OCI-LY7 (cell line): ENCODE measurements at regions of chr11 and their contacts with region 1.

Region 1: DNA sequence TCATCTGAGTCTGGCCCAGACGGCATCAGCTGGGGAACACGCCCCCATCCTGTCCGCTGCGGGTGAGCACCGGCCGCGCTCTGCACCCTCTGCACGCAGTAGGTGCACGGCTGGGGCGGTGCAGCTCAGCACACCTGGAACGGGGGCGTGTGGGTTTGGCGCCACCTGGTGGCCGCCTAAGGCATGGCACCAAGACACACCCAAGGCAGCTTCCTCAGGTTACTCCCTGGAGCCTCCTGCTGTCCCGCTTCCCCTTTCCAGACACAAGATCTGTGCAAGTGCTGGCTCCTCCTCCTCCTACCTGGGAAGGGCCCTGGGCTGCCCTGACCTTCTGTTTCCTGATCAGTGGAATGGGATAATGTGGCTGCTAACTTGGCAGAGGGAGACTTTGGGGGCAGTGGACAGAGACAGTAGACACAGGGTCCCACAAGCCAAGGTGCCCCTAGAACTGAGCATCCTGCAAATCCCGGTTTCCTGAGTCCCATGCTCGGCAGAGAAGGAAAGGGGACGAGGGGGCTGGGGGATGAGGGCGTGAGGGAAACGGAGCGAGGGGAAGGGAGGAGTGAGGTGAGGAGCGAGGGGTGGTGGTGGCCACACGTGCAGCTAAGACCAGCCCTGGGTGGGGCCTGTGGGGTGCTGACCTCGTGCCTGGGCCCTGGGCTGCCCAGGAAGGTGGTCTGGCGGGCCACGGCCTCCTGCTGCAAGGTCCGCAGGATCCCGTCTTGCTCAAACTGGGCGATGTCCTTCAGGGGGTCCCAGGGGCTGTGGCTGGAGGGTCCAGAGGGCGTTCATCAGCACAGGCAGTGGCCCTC is 34.8 kb upstream of the CARS1 start:
- DNase-seq: peak; percentile 61
- H3K4me3 ChIP-seq: no peak overlapping the region
- H3K27ac ChIP-seq: no peak overlapping the region
- H3K4me1 ChIP-seq: no peaks in the 10 kb centered on the region
- CTCF ChIP-seq: peak; percentile 89

Region 2: DNA sequence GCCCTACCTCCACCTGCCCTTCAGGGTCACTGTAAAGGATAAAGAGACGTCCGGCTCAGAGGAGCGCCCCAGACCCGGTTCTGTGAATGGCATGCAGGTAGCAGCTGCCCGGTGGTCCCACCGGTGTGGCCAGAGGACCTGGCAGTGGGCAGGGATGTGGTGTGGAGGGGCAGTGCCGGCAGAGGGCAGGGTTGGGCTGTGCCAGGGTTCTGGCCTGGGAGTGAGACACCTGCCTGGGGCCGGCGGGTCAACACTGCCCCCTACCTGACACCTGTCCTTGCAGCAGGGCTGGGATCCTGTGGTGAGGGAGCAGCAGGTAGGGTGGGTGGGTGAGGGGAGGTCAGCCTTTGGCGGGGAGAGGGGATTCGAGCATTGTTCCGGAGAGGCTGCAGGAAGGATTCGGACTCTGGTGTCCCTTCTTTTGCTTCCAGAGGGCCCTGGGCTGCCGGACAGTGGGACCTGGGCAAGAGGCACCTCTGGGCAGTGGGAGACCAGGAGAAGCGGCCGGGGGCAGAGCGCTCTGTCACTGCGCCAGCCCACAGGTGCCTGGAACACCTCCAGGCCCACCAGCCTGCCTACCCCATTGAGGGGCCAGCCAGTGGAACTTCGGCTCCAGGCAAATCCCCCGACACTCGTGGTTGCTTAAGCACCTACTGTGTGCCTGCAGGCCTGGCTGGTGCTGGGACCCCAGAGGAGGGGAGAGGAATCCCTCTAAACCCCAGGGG is 161.1 kb before region 1 on chr11:
- CTCF ChIA-PET with region 1: no interaction called
- POLR2A ChIA-PET with region 1: no interaction called
- intact Hi-C with region 1: loop called (anchors 2 kb)
- DNase-seq: peak; percentile 73
- H3K4me3 ChIP-seq: no peak overlapping the region
- H3K27ac ChIP-seq: no peak overlapping the region
- H3K4me1 ChIP-seq: no peaks in the 10 kb centered on the region
- CTCF ChIP-seq: peak; percentile 80

Region 3: GRCh38 chr11:3037040-3037944 is 54.7 kb before region 1 on chr11:
- CTCF ChIA-PET with region 1: no interaction called
- POLR2A ChIA-PET with region 1: no interaction called
- intact Hi-C with region 1: loop called (anchors 1 kb)
- DNase-seq: peak; percentile 66
- H3K4me3 ChIP-seq: no peak overlapping the region
- H3K27ac ChIP-seq: no peak overlapping the region
- H3K4me1 ChIP-seq: peaks cover 24% of the 10 kb centered on the region
- CTCF ChIP-seq: peak; percentile 85